ENCODE measurements at regions of chr15 and their contacts with region 1.

Region 1: DNA sequence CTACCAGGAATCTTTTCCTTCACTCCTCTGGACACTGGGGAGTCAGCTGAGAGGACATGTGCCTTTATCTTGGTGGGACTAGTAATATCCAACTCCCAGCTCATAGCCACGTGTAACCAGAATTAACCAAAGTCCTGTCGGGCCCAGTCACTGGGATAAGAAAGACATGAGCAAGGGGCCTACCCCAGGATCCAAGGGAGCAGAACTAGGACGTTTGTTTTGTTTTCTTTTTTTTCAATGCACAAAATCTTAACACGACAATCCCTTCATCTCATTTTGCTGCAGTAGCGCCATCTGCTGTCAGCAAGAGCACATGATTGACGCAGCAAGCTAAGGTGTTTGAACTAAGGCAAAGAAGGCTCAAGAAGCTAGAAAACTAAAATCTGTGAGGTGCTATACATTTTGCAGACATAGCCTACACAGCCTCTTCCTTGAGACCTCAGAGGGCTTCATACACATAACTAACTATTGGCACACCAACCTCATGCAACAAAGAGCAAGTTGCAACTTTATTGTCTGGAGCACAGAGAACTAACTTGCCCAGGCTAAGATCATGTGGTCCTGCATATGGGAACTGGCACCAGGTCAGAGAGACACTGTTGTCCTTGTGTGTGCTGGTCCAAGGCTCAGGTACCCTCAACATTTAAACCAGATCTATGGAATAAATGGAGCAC is 43.6 kb downstream of the RLBP1 start:
- DNase-seq: peak; percentile 64
- ATAC-seq: no peak
- H3K4me3 ChIP-seq: no peak overlapping the region
- H3K4me3 Mint-ChIP-seq: no peak overlapping the region
- H3K27ac ChIP-seq: no peak overlapping the region
- H3K27ac Mint-ChIP-seq: no peak overlapping the region
- H3K4me1 ChIP-seq: no peaks in the 10 kb centered on the region
- H3K4me1 Mint-ChIP-seq: no peaks in the 10 kb centered on the region
- H3K27me3 ChIP-seq: no peaks in the 10 kb centered on the region
- H3K27me3 Mint-ChIP-seq: no peaks in the 10 kb centered on the region
- CTCF ChIP-seq: peak; percentile 78

Region 2: GRCh38 chr15:88897456-88898194 is 280.1 kb before region 1 on chr15:
- CTCF ChIA-PET with region 1: interaction called, 39 read pairs
- POLR2A ChIA-PET with region 1: no interaction called
- intact Hi-C with region 1: loop called (anchors 2 kb)
- DNase-seq: peak; percentile 44
- ATAC-seq: peak; percentile 70
- H3K4me3 ChIP-seq: no peak overlapping the region
- H3K4me3 Mint-ChIP-seq: no peak overlapping the region
- H3K27ac ChIP-seq: no peak overlapping the region
- H3K27ac Mint-ChIP-seq: no peak overlapping the region
- H3K4me1 ChIP-seq: peaks cover 12 to 22% of the 10 kb centered on the region in 2 donors
- H3K4me1 Mint-ChIP-seq: peaks cover 14% of the 10 kb centered on the region
- H3K27me3 ChIP-seq: peaks cover 0 to 15% (median 0%) of the 10 kb centered on the region in 4 experiments
- H3K27me3 Mint-ChIP-seq: peaks cover 8% of the 10 kb centered on the region
- CTCF ChIP-seq: no peak

Region 3: GRCh38 chr15:88904624-88905327 is 273.0 kb before region 1 on chr15:
- CTCF ChIA-PET with region 1: interaction called, 39 read pairs
- POLR2A ChIA-PET with region 1: no interaction called
- intact Hi-C with region 1: no loop called
- DNase-seq: peak; percentile 83
- ATAC-seq: peak; percentile 88
- H3K4me3 ChIP-seq: no peak overlapping the region
- H3K4me3 Mint-ChIP-seq: no peak overlapping the region
- H3K27ac ChIP-seq: no peak overlapping the region
- H3K27ac Mint-ChIP-seq: no peak overlapping the region
- H3K4me1 ChIP-seq: peaks cover 3 to 8% of the 10 kb centered on the region in 2 donors
- H3K4me1 Mint-ChIP-seq: peaks cover 9% of the 10 kb centered on the region
- H3K27me3 ChIP-seq: no peaks in the 10 kb centered on the region
- H3K27me3 Mint-ChIP-seq: no peaks in the 10 kb centered on the region
- CTCF ChIP-seq: peak; percentile 99

Region 4: GRCh38 chr15:89057504-89058133 is 120.2 kb before region 1 on chr15:
- CTCF ChIA-PET with region 1: interaction called, 73 read pairs
- POLR2A ChIA-PET with region 1: no interaction called
- intact Hi-C with region 1: loop called (anchors 1 kb)
- DNase-seq: peak; percentile 74
- ATAC-seq: peak; percentile 91
- H3K4me3 ChIP-seq: no peak overlapping the region
- H3K4me3 Mint-ChIP-seq: no peak overlapping the region
- H3K27ac ChIP-seq: no peak overlapping the region
- H3K27ac Mint-ChIP-seq: no peak overlapping the region
- H3K4me1 ChIP-seq: no peaks in the 10 kb centered on the region
- H3K4me1 Mint-ChIP-seq: no peaks in the 10 kb centered on the region
- H3K27me3 ChIP-seq: peaks cover 0 to 8% (median 0%) of the 10 kb centered on the region in 4 experiments
- H3K27me3 Mint-ChIP-seq: peaks cover 14% of the 10 kb centered on the region
- CTCF ChIP-seq: peak; percentile 95

Region 5: GRCh38 chr15:89157918-89158564 is 19.7 kb before region 1 on chr15:
- CTCF ChIA-PET with region 1: interaction called, 12 read pairs
- POLR2A ChIA-PET with region 1: no interaction called
- intact Hi-C with region 1: no loop called
- DNase-seq: no peak
- ATAC-seq: no peak
- H3K4me3 ChIP-seq: no peak overlapping the region
- H3K4me3 Mint-ChIP-seq: no peak overlapping the region
- H3K27ac ChIP-seq: no peak overlapping the region
- H3K27ac Mint-ChIP-seq: no peak overlapping the region
- H3K4me1 ChIP-seq: no peaks in the 10 kb centered on the region
- H3K4me1 Mint-ChIP-seq: no peaks in the 10 kb centered on the region
- H3K27me3 ChIP-seq: no peaks in the 10 kb centered on the region
- H3K27me3 Mint-ChIP-seq: no peaks in the 10 kb centered on the region
- CTCF ChIP-seq: no peak

Region 6: GRCh38 chr15:89167267-89168176 is 10.2 kb before region 1 on chr15:
- CTCF ChIA-PET with region 1: interaction called, 25 read pairs
- POLR2A ChIA-PET with region 1: no interaction called
- intact Hi-C with region 1: no loop called
- DNase-seq: no peak
- ATAC-seq: no peak
- H3K4me3 ChIP-seq: no peak overlapping the region
- H3K4me3 Mint-ChIP-seq: no peak overlapping the region
- H3K27ac ChIP-seq: no peak overlapping the region
- H3K27ac Mint-ChIP-seq: no peak overlapping the region
- H3K4me1 ChIP-seq: no peaks in the 10 kb centered on the region
- H3K4me1 Mint-ChIP-seq: peaks cover 4% of the 10 kb centered on the region
- H3K27me3 ChIP-seq: no peaks in the 10 kb centered on the region
- H3K27me3 Mint-ChIP-seq: no peaks in the 10 kb centered on the region
- CTCF ChIP-seq: no peak

Region 7: DNA sequence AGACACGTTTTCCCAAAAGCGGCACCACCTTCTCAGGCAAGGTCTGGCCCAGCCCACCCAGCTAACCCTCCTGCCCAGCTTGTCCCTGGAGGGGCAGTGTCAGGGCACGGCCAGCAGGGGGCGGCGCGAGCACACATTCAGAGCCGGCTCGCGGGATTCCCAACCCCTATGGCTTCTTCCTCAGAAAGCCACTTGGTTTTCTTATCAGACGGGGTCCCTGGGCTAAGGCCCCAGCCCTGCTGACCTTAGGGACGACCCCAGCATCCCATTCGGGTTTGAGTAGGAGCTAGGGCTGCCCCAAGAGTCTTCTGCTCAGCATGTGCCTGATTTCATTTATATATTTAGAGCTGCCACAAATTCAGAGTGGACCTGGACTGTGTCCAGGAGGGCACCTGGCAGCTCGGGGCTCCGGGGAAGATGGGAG is 29.1 kb after region 1 on chr15:
- CTCF ChIA-PET with region 1: interaction called, 10 read pairs
- POLR2A ChIA-PET with region 1: no interaction called
- intact Hi-C with region 1: no loop called
- DNase-seq: peak; percentile 71
- ATAC-seq: peak; percentile 90
- H3K4me3 ChIP-seq: no peak overlapping the region
- H3K4me3 Mint-ChIP-seq: no peak overlapping the region
- H3K27ac ChIP-seq: no peak overlapping the region
- H3K27ac Mint-ChIP-seq: no peak overlapping the region
- H3K4me1 ChIP-seq: peaks cover 3% of the 10 kb centered on the region in 2 donors
- H3K4me1 Mint-ChIP-seq: peaks cover 9% of the 10 kb centered on the region
- H3K27me3 ChIP-seq: no peaks in the 10 kb centered on the region
- H3K27me3 Mint-ChIP-seq: peaks cover 4% of the 10 kb centered on the region
- CTCF ChIP-seq: peak; percentile 100

Measured in B cell (primary cell).